Esophagus muscularis mucosa (tissue), 4 donors: ENCODE measurements at regions of chr22 and their contacts with region 1.

Region 1: DNA sequence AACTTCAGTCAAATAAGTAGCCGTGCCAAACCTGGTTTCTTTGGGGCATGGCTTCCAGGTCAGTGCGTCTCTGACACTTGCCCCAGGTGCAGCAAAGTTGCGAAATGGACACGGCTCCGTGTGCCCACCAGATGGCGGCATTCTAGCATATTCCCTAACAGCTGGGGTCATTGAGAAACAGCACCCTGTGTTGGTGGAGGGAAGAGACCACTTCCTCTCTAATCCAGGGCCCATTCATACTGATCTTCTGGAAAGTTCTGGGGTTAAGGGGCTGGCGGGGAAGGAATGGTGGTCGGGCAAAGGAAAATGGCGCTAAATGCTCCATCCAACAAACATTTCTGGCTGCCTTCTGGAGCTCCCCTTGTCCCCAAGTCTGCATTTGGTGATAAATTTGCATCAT is 141.2 kb upstream of the TIMP3 start:
- DNase-seq: no peak
- H3K4me3 ChIP-seq: no peak overlapping the region
- H3K27ac ChIP-seq: no peak overlapping the region
- H3K4me1 ChIP-seq: peaks cover 10 to 25% (median 18%) of the 10 kb centered on the region in 4 donors
- H3K27me3 ChIP-seq: peaks cover 0 to 4% (median 0%) of the 10 kb centered on the region in 4 donors
- CTCF ChIP-seq: peak; percentile 69 to 81 (median 78)
- EP300 ChIP-seq: no peak
- POLR2A ChIP-seq: no peak

Region 2: GRCh38 chr22:32985899-32986765 is 325.8 kb after region 1 on chr22:
- intact Hi-C with region 1: loop called (anchors 2 kb)
- DNase-seq: no peak
- H3K4me3 ChIP-seq: no peak overlapping the region
- H3K27ac ChIP-seq: peak overlapping the region in 1 of 4 donors; percentile 46
- H3K4me1 ChIP-seq: peaks cover 10 to 25% (median 14%) of the 10 kb centered on the region in 4 donors
- H3K27me3 ChIP-seq: no peaks in the 10 kb centered on the region
- CTCF ChIP-seq: peak; percentile 84 to 95 (median 92)
- EP300 ChIP-seq: no peak
- POLR2A ChIP-seq: no peak